Activated B cell treated with CpG ODN at 0.5 μM for 24 hours (primary cell): ENCODE measurements at regions of chr22 and their contacts with region 1.

Region 1: DNA sequence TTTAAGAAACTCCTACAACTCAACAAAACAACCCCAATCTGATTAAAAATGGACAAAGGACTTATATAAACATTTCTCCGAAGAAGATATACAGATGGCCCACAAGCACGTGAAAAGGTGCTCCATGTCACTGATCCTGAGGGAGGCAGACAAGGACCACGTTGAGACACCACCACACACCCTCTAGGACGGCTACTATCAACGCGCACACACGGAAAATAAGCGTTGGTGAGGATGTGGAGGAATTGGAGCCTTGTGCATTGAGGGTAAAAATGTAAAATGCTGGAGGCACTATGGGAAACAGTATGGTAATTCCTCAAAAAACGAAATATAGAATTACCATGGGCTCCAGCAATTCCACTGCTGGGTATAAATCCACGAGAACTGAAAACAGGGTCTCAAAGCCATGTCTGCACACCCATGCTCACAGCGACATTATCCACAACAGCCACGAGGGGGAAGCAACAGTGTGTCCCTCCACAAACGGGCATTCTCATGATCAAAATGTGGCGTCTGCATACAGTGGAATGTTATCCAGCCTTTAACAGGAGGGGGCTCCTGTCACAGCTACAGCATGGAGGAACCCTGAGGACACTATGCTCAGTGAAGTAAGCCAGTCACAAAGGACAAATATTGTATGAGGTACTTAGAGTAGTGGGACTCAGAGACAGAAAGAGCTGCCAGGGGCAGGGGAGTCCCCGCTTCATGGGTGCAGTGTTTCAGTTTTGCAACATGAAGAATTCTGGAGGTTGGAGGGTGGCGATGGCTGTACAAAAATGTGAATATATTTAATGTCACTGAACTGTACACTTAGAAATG is 22.5 kb downstream of the YPEL1 start:
- DNase-seq: no peak
- ATAC-seq: peak; percentile 95
- H3K4me3 Mint-ChIP-seq: peak overlapping the region; percentile 28
- H3K27ac Mint-ChIP-seq: peak overlapping the region; percentile 27
- H3K4me1 Mint-ChIP-seq: peaks cover 7% of the 10 kb centered on the region
- H3K27me3 Mint-ChIP-seq: no peaks in the 10 kb centered on the region
- CTCF ChIP-seq: peak; percentile 25

Region 2: GRCh38 chr22:21726650-21727049 is 13.5 kb after region 1 on chr22:
- CTCF ChIA-PET with region 1: no interaction called
- POLR2A ChIA-PET with region 1: no interaction called
- intact Hi-C with region 1: loop called (anchors 1 kb)
- DNase-seq: no peak
- ATAC-seq: peak; percentile 76
- H3K4me3 Mint-ChIP-seq: no peak overlapping the region
- H3K27ac Mint-ChIP-seq: no peak overlapping the region
- H3K4me1 Mint-ChIP-seq: peaks cover 28% of the 10 kb centered on the region
- H3K27me3 Mint-ChIP-seq: no peaks in the 10 kb centered on the region
- CTCF ChIP-seq: no peak

Region 3: DNA sequence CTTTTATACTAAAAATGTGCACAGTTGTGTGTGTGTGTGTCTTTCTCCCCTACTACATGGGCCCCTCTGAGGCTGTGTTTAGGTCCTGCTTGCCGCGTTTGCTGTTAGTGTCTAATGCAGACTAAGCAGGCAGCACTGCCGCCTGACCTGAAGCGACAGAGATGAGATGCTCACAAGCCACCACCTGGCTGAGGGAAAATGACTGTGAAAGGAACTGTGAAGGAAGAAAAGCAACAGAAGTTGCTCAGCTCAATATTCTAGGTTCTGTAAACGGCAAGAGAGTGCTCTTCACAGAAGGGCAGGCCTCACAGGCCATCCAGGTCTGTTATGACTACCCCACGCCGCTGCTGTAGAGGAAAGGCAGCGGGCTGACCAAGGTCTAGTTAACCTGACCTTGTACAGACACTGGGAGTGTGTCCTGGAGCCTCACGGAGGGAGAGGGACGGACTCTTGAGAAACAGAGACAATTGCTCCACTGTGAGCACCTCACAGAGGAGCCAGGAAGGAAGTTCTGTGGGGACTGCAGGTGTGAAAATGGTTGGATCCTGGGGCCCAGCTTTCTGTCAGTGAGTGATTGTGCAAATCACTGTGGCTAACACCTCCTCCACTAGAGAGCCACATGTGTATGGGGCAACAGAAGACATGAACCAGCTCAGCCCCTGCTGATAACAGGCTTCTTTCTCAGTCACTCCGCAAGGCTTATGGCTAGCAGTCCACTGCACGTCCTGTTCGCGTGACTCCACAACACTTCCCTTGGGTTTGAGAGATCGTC is 53.8 kb after region 1 on chr22:
- CTCF ChIA-PET with region 1: no interaction called
- POLR2A ChIA-PET with region 1: no interaction called
- intact Hi-C with region 1: loop called (anchors 10 kb)
- DNase-seq: no peak
- ATAC-seq: no peak
- H3K4me3 Mint-ChIP-seq: no peak overlapping the region
- H3K27ac Mint-ChIP-seq: peak overlapping the region; percentile 8
- H3K4me1 Mint-ChIP-seq: no peaks in the 10 kb centered on the region
- H3K27me3 Mint-ChIP-seq: no peaks in the 10 kb centered on the region
- CTCF ChIP-seq: no peak